Activated T-helper 1 cell treated with anti-CD3 and anti-CD28 coated beads, Interleukin-12 subunit alpha, Interleukin-12 subunit beta, Interleukin-2, Interleukin-4 antibody, amounts not matched to agents 30 ng/mL and 10 ng/mL and 1 ng/mL, durations not matched to agents 14 hours and 24 hours and 36 hours (primary cell): ENCODE measurements at regions of chr17 and their contacts with region 1.

Region 1: GRCh38 chr17:39952680-39953470 is 9.9 kb upstream of the GSDMA start:
- DNase-seq: peak; percentile 79
- H3K4me3 Mint-ChIP-seq: peak overlapping the region; percentile 79
- H3K27ac Mint-ChIP-seq: peak overlapping the region; percentile 77
- H3K4me1 Mint-ChIP-seq: peaks cover 38% of the 10 kb centered on the region
- H3K27me3 Mint-ChIP-seq: peaks cover 3% of the 10 kb centered on the region

Region 2: GRCh38 chr17:39939588-39940419 is 13.1 kb before region 1 on chr17:
- intact Hi-C with region 1: loop called (anchors 1 kb)
- DNase-seq: peak; percentile 71
- H3K4me3 Mint-ChIP-seq: peak overlapping the region; percentile 31
- H3K27ac Mint-ChIP-seq: peak overlapping the region; percentile 87
- H3K4me1 Mint-ChIP-seq: peaks cover 25% of the 10 kb centered on the region
- H3K27me3 Mint-ChIP-seq: peaks cover 4% of the 10 kb centered on the region

Region 3: GRCh38 chr17:40019140-40019991 is 66.5 kb after region 1 on chr17:
- intact Hi-C with region 1: no loop called
- DNase-seq: no peak
- H3K4me3 Mint-ChIP-seq: no peak overlapping the region
- H3K27ac Mint-ChIP-seq: peak overlapping the region; percentile 44
- H3K4me1 Mint-ChIP-seq: no peaks in the 10 kb centered on the region
- H3K27me3 Mint-ChIP-seq: no peaks in the 10 kb centered on the region